Activated T-helper 1 cell treated with anti-CD3 and anti-CD28 coated beads, Interleukin-12 subunit alpha, Interleukin-12 subunit beta, Interleukin-2, Interleukin-4 antibody, amounts not matched to agents 30 ng/mL and 10 ng/mL and 1 ng/mL, durations not matched to agents 14 hours and 24 hours and 36 hours (primary cell): ENCODE measurements at regions of chr5 and their contacts with region 1.

Region 1: GRCh38 chr5:126776497-126777256 is at the start of gene LMNB1:
- DNase-seq: peak; percentile 94
- H3K4me3 Mint-ChIP-seq: peak within 1 kb of the TSS; percentile 94
- H3K27ac Mint-ChIP-seq: peak within 1 kb of the TSS; percentile 97
- H3K4me1 Mint-ChIP-seq: peaks cover 24% of the 10 kb centered on the region
- H3K27me3 Mint-ChIP-seq: no peaks in the 10 kb centered on the region
- total RNA-seq, gene LMNB1: 200 and 209 TPM in 2 replicates

Region 2: DNA sequence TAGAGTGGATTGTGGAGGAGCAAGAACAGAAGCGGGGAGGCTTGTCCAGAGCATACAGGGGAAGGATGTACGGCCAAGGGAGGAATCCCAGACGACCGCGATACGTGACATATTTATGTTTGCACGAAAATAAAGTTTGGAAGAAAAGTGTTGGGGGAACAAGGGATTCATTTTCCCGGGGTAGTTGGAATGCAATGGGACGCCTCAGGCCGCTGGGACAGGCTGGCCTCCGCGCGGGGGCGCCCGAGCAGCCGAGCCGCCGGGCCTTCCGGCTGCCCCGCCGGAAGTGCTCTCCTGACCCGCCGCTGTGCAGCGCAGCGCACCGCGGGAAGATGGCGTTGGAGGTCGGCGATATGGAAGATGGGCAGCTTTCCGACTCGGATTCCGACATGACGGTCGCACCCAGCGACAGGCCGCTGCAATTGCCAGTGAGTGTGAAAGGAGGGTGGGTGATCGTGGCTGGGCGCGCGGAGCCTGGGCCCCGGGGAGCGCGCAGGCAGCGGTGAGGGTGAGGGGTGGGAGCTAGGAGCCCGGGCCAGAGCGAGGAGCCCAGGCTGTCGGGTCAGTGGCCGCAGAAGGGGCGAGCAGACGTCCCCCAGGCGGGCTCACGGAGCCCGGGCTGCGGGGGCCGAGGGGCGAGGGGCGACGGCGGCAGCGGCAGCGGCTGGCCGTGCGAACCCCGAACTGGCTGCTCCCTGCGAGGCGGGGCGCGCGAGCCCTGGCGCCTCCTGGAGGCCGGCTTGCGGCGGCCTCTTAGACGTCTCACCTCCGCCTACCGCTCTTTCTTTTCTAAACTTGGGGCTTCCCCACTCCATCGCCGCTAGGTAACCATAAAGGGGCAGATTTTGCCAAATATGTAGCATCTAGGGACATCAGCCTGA is 175.8 kb before region 1 on chr5 and contains the start of gene PHAX:
- intact Hi-C with region 1: loop called (anchors 1 kb)
- DNase-seq: peak; percentile 72
- H3K4me3 Mint-ChIP-seq: peak within 1 kb of the TSS; percentile 95
- H3K27ac Mint-ChIP-seq: peak within 1 kb of the TSS; percentile 97
- H3K4me1 Mint-ChIP-seq: peaks cover 33% of the 10 kb centered on the region
- H3K27me3 Mint-ChIP-seq: peaks cover 10% of the 10 kb centered on the region
- total RNA-seq, gene PHAX: 46.6 and 52.9 TPM in 2 replicates

Region 3: GRCh38 chr5:126736141-126736540 is 40.5 kb before region 1 on chr5:
- intact Hi-C with region 1: loop called (anchors 1 kb)
- DNase-seq: no peak
- H3K4me3 Mint-ChIP-seq: no peak overlapping the region
- H3K27ac Mint-ChIP-seq: peak overlapping the region; percentile 5
- H3K4me1 Mint-ChIP-seq: peaks cover 1% of the 10 kb centered on the region
- H3K27me3 Mint-ChIP-seq: no peaks in the 10 kb centered on the region

Region 4: GRCh38 chr5:126801992-126802294 is 25.3 kb after region 1 on chr5:
- intact Hi-C with region 1: loop called (anchors 1 kb)
- DNase-seq: no peak
- H3K4me3 Mint-ChIP-seq: no peak overlapping the region
- H3K27ac Mint-ChIP-seq: peak overlapping the region; percentile 29
- H3K4me1 Mint-ChIP-seq: peaks cover 50% of the 10 kb centered on the region
- H3K27me3 Mint-ChIP-seq: no peaks in the 10 kb centered on the region

Region 5: GRCh38 chr5:127030259-127031146 is 253.8 kb after region 1 on chr5 and contains the start of gene MARCHF3:
- intact Hi-C with region 1: loop called (anchors 1 kb)
- DNase-seq: peak; percentile 96
- H3K4me3 Mint-ChIP-seq: peak within 1 kb of the TSS; percentile 89
- H3K27ac Mint-ChIP-seq: peak within 1 kb of the TSS; percentile 69
- H3K4me1 Mint-ChIP-seq: peaks cover 30% of the 10 kb centered on the region
- H3K27me3 Mint-ChIP-seq: peaks cover 32% of the 10 kb centered on the region
- total RNA-seq, gene MARCHF3: 5.2 and 5.9 TPM in 2 replicates

Region 6: GRCh38 chr5:127785098-127785927 is 1008.6 kb after region 1 on chr5:
- intact Hi-C with region 1: loop called (anchors 5 kb)
- DNase-seq: peak; percentile 55
- H3K4me3 Mint-ChIP-seq: peak overlapping the region; percentile 62
- H3K27ac Mint-ChIP-seq: peak overlapping the region; percentile 96
- H3K4me1 Mint-ChIP-seq: peaks cover 45% of the 10 kb centered on the region
- H3K27me3 Mint-ChIP-seq: peaks cover 3% of the 10 kb centered on the region